ENCODE measurements at regions of chr2 and their contacts with region 1.

Region 1: DNA sequence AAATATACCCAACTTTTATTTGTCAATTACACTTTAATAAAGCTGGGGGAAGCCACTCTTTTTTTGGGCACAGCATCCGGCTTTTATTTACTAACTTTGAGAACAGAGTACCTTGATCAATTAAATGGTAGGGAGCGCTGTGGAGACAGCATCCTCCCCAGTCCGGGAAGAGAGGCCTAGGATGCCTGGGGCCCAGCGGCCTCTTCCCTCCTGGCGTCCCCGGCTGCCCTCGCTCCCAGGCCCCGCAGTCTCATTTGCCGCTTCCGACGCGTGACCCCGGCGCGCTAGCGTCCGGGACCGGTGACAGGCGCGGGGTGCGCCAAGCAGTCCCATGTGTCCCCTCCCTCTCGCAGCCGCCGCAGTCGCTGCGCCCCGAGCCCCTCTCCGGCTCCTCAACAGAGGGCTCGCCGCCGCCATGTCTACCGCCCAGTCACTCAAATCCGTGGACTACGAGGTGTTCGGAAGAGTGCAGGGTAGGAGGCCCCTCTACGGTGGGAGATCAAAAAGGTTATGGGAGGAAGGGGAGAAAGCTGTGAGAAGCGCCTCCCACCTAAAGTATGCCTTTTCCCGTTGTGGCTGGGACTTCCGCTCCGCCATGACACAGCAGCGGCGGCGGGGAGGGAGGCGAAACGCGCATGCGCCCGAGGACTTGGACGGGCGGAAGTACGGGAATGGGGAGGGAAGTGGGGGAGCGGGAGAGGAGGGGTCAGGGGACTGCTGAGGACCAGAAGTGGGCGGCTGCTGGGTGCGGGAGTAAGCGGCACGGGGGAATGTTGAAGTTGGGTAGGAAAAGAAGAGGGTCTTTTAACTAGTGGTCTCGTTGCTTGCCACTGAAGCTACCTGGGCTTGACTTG is at the start of gene ACYP2:
- DNase-seq: peak; percentile 96
- ATAC-seq: peak; percentile 82
- H3K4me3 ChIP-seq: peak within 1 kb of the TSS; percentile 75 to 97 (median 85)
- H3K4me3 Mint-ChIP-seq: peak within 1 kb of the TSS; percentile 98
- H3K27ac ChIP-seq: peak within 1 kb of the TSS; percentile 97 to 99
- H3K27ac Mint-ChIP-seq: peak within 1 kb of the TSS; percentile 100
- H3K4me1 ChIP-seq: peaks cover 7% of the 10 kb centered on the region in 2 donors
- H3K4me1 Mint-ChIP-seq: peaks cover 16% of the 10 kb centered on the region
- H3K27me3 ChIP-seq: no peaks in the 10 kb centered on the region
- H3K27me3 Mint-ChIP-seq: no peaks in the 10 kb centered on the region
- CTCF ChIP-seq: no peak
- total RNA-seq, gene ACYP2: 14.0 and 16.4 TPM in 2 replicates

Region 2: GRCh38 chr2:53786705-53787612 is 328.6 kb before region 1 on chr2 and contains the starts of genes ASB3 and ERLEC1:
- CTCF ChIA-PET with region 1: no interaction called
- POLR2A ChIA-PET with region 1: no interaction called
- intact Hi-C with region 1: loop called (anchors 5 kb)
- DNase-seq: peak; percentile 92
- ATAC-seq: peak; percentile 92
- H3K4me3 ChIP-seq: peak within 1 kb of the TSS; percentile 77 to 98 (median 93)
- H3K4me3 Mint-ChIP-seq: peak within 1 kb of the TSS; percentile 98
- H3K27ac ChIP-seq: peak within 1 kb of the TSS; percentile 80 to 88
- H3K27ac Mint-ChIP-seq: peak within 1 kb of the TSS; percentile 92
- H3K4me1 ChIP-seq: peaks cover 29 to 33% of the 10 kb centered on the region in 2 donors
- H3K4me1 Mint-ChIP-seq: peaks cover 57% of the 10 kb centered on the region
- H3K27me3 ChIP-seq: no peaks in the 10 kb centered on the region
- H3K27me3 Mint-ChIP-seq: no peaks in the 10 kb centered on the region
- CTCF ChIP-seq: no peak
- total RNA-seq, gene ASB3: 30.7 and 38.4 TPM in 2 replicates
- total RNA-seq, gene ERLEC1: 22.9 and 24.5 TPM in 2 replicates

Region 3: GRCh38 chr2:53970724-53971602 is 144.5 kb before region 1 on chr2 and contains the start of gene PSME4:
- CTCF ChIA-PET with region 1: no interaction called
- POLR2A ChIA-PET with region 1: interaction called, 3 read pairs
- intact Hi-C with region 1: loop called (anchors 1 kb)
- DNase-seq: peak; percentile 93
- ATAC-seq: peak; percentile 89
- H3K4me3 ChIP-seq: peak within 1 kb of the TSS; percentile 71 to 98 (median 95)
- H3K4me3 Mint-ChIP-seq: peak within 1 kb of the TSS; percentile 94
- H3K27ac ChIP-seq: peak within 1 kb of the TSS; percentile 71 to 89
- H3K27ac Mint-ChIP-seq: peak within 1 kb of the TSS; percentile 91
- H3K4me1 ChIP-seq: peaks cover 31 to 33% of the 10 kb centered on the region in 2 donors
- H3K4me1 Mint-ChIP-seq: peaks cover 47% of the 10 kb centered on the region
- H3K27me3 ChIP-seq: no peaks in the 10 kb centered on the region
- H3K27me3 Mint-ChIP-seq: no peaks in the 10 kb centered on the region
- CTCF ChIP-seq: no peak
- total RNA-seq, gene PSME4: 59.9 and 61.9 TPM in 2 replicates

Region 4: DNA sequence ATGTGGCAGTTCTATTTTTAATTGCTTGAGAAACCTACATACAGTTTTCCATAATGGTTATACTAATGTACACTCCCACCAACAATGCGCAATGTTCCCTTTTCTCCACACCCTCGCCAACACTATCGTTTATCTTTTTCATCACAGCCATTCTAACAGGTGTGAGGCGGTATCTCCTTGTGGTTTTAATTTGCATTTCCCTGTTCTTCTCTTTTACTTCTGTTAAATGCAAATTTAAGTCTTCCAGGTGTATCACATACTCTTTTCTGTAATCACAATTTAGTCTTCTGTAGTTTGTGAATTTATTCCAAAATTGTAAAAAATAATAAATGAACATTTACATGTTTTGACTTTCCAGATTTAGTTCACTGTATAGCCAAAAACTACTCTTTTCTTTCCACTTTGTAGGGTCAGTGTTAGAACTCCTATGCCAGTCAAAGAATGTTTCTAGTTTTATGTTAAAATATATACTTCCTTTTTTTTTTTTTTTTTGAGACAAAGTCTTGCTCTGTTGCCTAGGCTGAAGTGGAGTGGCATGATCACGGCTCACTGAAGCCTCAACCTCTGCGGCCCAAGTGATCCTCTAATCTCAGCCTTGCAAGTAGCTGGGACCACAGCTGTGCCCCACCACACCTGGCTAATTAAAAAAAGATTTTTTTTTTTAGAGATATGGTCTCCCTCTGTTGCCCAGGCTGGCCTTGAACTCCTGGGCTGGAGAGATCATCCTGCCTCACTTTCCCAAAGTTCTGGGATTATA is 15.5 kb before region 1 on chr2:
- CTCF ChIA-PET with region 1: interaction called, 9 read pairs
- POLR2A ChIA-PET with region 1: interaction called, 5 read pairs
- intact Hi-C with region 1: loop called (anchors 2 kb)
- DNase-seq: peak; percentile 88
- ATAC-seq: peak; percentile 80
- H3K4me3 ChIP-seq: peak overlapping the region in 2 of 5 experiments; percentile 25 to 50
- H3K4me3 Mint-ChIP-seq: peak overlapping the region; percentile 56
- H3K27ac ChIP-seq: peak overlapping the region; percentile 77 to 85
- H3K27ac Mint-ChIP-seq: peak overlapping the region; percentile 85
- H3K4me1 ChIP-seq: peaks cover 78 to 79% of the 10 kb centered on the region in 2 donors
- H3K4me1 Mint-ChIP-seq: peaks cover 80% of the 10 kb centered on the region
- H3K27me3 ChIP-seq: no peaks in the 10 kb centered on the region
- H3K27me3 Mint-ChIP-seq: no peaks in the 10 kb centered on the region
- CTCF ChIP-seq: no peak

Region 5: DNA sequence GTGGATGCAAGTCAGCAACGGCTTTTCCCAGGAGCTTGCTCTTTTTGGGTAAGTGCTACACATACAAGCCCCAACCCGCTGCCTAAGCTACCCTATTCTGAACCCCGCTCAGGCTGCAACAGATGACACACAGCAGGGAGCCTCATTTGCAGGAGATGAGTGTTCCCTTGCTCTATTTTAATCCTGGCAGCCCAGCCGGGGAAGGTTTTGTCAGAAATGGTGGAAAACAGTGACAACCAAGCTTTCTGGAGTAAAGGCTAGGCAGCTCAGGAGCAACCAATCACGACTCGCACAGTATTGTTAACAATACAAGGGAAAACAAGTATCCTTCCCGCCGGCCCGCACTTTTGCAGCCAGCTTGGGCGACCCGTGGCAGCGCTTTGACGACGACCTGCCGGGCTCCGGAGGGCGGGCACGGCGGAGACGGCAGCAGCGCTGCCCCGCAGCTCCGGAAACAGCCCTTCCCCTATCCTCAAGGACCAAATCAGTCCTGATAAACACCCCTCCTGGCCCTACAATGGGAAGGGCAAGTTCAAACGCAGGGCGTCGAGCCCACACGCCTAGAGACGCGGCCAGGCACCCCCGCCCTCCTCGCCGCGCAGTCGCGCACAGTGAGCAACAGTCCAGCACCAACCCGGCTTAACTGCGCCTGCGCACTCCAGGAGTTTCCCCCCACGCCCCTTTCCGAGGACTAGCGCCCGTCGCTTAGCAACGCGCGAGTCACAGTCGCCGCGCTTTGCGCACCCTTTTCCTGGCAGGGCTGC is 214.8 kb after region 1 on chr2:
- CTCF ChIA-PET with region 1: no interaction called
- POLR2A ChIA-PET with region 1: no interaction called
- intact Hi-C with region 1: loop called (anchors 5 kb)
- DNase-seq: peak; percentile 93
- ATAC-seq: peak; percentile 94
- H3K4me3 ChIP-seq: peak overlapping the region; percentile 51 to 67 (median 57)
- H3K4me3 Mint-ChIP-seq: peak overlapping the region; percentile 94
- H3K27ac ChIP-seq: peak overlapping the region in 1 of 2 donors; percentile 29
- H3K27ac Mint-ChIP-seq: peak overlapping the region; percentile 91
- H3K4me1 ChIP-seq: peaks cover 21 to 23% of the 10 kb centered on the region in 2 donors
- H3K4me1 Mint-ChIP-seq: peaks cover 18% of the 10 kb centered on the region
- H3K27me3 ChIP-seq: peaks cover 0 to 23% (median 10%) of the 10 kb centered on the region in 4 experiments
- H3K27me3 Mint-ChIP-seq: peaks cover 19% of the 10 kb centered on the region
- CTCF ChIP-seq: no peak

Region 6: GRCh38 chr2:55232084-55232862 is 1116.8 kb after region 1 on chr2 and contains the starts of genes CLHC1 and RPS27A:
- CTCF ChIA-PET with region 1: no interaction called
- POLR2A ChIA-PET with region 1: no interaction called
- intact Hi-C with region 1: loop called (anchors 1 kb)
- DNase-seq: peak; percentile 97
- ATAC-seq: peak; percentile 87
- H3K4me3 ChIP-seq: peak within 1 kb of the TSS; percentile 72 to 98 (median 94)
- H3K4me3 Mint-ChIP-seq: peak within 1 kb of the TSS; percentile 94
- H3K27ac ChIP-seq: peak within 1 kb of the TSS; percentile 95 to 98
- H3K27ac Mint-ChIP-seq: peak within 1 kb of the TSS; percentile 99
- H3K4me1 ChIP-seq: peaks cover 28 to 39% of the 10 kb centered on the region in 2 donors
- H3K4me1 Mint-ChIP-seq: peaks cover 54% of the 10 kb centered on the region
- H3K27me3 ChIP-seq: no peaks in the 10 kb centered on the region
- H3K27me3 Mint-ChIP-seq: no peaks in the 10 kb centered on the region
- CTCF ChIP-seq: no peak
- total RNA-seq, gene CLHC1: 12.0 and 12.8 TPM in 2 replicates
- total RNA-seq, gene RPS27A: 1,561 and 1,678 TPM in 2 replicates